RWPE1 (cell line): ENCODE measurements at regions of chr11 and their contacts with region 1.

Region 1: DNA sequence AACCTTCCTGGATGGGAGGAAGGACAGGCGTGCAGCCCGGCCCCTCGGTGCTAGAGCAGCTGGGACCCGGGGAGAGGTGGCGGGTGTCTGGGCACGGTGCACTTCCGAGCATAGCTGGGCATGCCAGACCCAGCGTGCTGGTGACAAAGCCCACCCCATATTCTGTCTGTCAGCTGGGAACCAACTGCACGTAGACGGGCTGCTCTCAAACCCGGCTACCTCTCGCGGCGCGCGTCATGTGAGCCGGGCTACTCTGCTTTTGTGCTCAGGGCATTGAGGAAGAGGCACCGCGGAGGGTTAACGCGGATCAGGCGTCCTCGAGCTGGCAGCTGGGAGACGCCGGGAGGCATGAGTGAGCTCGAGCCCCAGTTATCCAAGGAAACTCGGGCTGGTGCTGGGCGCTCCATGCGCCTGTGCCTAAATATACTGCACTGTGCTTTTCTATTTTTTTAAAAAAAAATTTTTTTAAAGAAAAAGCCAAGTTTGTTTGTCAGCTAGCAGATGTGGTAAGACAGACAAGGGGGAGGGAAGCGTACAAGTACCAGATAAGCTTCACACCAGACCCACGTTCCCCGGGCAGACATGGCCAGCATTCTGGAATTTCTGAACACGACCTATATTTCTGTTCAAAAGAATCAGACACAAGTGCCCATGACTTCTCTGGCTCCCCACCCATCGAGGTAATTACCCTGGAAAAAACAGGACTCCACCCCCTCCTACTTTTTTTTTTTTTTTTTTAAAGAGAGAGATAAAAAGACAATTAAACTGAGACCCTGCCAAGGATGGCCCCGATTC is 425.6 kb downstream of the SHANK2 start:
- DNase-seq: peak; percentile 11
- H3K27ac ChIP-seq: no peak overlapping the region
- CTCF ChIP-seq: no peak

Region 2: DNA sequence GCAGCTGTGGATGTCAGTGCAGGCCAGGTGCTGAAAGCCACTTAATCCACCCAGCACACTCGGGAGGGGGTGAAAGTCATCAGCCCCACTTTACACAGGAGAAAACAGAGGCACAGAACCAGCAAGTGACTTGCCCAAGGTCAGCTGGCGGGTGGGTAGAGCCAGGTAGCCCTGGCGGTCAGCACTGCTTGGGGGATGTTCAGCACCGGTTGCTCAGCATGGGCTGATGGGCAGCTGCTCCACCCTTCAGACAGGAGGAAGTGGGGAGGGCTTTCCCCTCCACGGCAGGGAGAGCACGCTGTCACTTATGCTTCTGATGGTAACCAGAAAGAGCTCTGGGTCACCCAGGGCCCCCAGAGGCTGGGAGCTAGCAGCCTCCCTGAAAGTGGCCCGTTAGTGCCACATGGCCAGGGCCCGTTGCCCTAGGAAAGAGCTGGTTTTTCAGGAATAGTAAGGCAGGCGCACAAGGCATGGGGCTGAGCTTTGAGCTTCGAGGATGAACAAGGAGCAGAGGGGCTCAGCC is 10.5 kb before region 1 on chr11:
- CTCF ChIA-PET with region 1: interaction called, 19 read pairs
- POLR2A ChIA-PET with region 1: interaction called, 3 read pairs
- DNase-seq: no peak
- H3K27ac ChIP-seq: no peak overlapping the region
- CTCF ChIP-seq: no peak

Region 3: DNA sequence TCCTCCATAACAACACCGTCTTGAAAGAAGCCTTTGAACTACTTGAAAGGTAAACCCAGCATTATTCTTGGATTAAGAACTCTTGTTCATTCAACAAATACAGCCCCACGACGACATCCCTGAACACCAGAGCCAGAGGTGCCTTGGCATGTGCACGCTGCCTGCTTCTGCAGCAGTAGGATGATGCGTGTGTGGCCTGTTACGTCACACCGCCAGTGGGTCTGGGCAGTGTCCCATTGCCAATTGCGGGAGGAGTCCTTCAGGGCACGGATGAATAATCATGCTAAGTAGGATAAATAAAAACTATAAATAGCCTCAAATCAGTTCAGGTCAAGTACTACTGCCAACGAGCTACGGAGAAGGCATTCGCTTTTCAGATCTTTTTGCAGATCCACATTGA is 45.1 kb after region 1 on chr11:
- CTCF ChIA-PET with region 1: interaction called, 10 read pairs
- POLR2A ChIA-PET with region 1: no interaction called
- DNase-seq: no peak
- H3K27ac ChIP-seq: no peak overlapping the region
- CTCF ChIP-seq: no peak